ENCODE measurements at regions of chr2 and their contacts with region 1.

Region 1: GRCh38 chr2:110858135-110858725 is 125.9 kb downstream of the ACOXL start:
- DNase-seq: no peak

Region 2: DNA sequence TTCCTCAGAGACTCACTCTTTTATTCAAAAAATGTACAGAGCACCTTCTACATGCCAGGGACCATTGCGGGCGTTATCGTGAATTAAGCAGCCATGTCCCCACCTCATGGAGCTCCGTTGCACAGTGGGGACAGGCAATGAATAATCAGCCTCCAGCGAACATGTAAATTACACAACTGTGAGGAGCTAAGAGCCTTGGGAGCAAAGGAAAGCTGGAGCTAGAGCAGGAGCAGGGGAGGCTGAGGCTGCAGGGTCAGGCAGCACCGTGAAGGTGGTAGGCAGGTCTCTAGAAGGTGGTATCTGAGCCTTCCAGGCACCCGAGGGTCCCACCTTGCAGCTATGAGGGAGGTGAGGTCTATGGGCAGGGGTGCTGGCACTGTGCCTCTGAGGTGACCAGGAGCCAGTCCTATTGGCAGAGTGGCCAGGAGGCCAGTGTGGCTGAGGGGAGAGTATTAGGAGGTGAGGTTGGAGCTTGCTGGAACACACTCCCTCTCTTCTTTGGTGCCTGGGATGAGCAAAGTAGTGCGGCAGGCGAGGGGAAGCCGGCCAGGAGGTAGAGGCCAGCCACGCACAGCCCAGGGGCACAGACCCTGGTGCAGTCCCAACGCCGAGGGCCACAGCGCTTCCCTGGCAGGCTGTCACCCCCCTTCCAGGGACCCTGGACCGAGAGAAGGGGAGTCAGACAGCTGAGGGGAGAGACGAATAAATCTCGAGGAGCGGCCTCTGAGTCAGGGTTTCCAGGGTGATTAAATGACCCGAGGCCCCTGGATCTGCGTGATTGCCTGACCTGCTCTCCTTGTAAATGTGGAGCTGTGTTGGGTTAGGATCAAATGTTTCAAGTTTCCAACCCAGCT is 1411.7 kb before region 1 on chr2:
- intact Hi-C with region 1: loop called in 1 of 2 experiments (anchors 5 kb)
- DNase-seq: peak; percentile 68

Region 3: DNA sequence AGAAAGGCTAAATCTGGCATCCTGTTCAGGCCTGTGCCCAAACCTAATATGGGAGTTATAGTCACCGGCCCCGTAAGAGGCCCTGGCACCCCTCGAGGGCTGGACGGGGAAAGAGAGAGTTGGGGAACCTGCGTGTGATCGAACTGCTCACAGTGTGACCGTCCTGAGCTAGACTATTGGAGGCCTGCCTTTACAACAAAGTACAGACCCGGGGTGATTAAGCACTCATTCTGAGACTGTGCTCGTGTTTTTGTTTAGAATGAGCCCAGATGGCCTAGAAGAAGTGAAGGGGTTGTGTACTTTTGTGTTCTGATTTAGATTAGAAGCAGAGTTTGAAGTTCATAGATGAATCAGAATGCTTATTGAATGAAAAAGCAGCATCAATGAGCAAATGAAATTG is 10.6 kb before region 1 on chr2:
- intact Hi-C with region 1: loop called in 1 of 2 experiments (anchors 1 kb)
- DNase-seq: no peak

Measured in posterior vena cava (tissue), 2 donors.